Activated naive CD4-positive, alpha-beta T cell treated with anti-CD3 and anti-CD28 coated beads, Interleukin-2, amount 10 ng/mL, durations not matched to agents 7 days and 5 days (primary cell): ENCODE measurements at regions of chr1 and their contacts with region 1.

Region 1: DNA sequence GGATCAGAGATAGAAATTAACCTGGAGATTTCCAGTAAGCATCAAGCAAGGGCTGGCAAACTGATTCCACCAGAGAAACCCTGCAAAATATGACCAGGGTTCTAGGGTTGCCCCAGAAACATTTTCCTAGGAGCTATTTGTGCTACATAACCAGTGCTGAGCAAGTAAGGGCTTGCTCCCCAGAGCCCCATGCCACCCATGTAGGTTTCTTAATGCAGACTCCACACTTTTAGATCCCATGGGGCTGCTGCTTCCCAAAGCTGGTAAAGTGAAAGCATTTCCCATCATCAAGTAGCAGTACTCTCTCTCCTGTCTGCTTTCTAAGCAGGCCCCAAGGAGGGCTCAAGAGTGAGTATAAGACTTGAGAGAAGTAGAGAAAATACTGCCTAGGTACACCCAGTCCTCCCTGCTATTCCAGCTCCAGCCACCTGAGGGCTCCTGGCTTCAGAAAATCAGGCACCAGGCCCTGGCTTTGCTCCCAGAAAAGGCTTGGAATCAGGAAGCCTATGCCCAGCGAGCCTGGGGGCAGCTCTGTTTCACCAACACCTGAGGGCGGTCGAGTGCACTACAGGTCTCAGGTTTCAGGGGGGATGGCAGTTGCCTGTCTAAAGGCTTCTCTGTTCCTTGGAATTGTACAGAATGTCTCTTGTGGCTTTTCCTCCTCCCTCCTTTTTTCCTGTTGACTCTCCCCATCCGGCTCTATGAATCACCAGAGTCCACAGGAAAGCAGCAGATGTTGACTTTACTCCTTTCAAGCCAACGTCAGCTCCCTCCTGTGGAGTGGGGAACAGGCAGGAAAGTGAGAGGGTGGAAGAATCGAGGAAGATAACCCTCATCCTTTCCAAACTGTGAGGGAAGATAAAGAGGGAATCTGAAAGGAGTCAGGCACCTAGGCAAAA is 6.2 kb upstream of the ANKRD35 start:
- DNase-seq: peak; percentile 73
- H3K4me3 Mint-ChIP-seq: no peak overlapping the region
- H3K27ac Mint-ChIP-seq: no peak overlapping the region
- H3K4me1 Mint-ChIP-seq: peaks cover 1% of the 10 kb centered on the region
- H3K27me3 Mint-ChIP-seq: peaks cover 14% of the 10 kb centered on the region

Region 2: DNA sequence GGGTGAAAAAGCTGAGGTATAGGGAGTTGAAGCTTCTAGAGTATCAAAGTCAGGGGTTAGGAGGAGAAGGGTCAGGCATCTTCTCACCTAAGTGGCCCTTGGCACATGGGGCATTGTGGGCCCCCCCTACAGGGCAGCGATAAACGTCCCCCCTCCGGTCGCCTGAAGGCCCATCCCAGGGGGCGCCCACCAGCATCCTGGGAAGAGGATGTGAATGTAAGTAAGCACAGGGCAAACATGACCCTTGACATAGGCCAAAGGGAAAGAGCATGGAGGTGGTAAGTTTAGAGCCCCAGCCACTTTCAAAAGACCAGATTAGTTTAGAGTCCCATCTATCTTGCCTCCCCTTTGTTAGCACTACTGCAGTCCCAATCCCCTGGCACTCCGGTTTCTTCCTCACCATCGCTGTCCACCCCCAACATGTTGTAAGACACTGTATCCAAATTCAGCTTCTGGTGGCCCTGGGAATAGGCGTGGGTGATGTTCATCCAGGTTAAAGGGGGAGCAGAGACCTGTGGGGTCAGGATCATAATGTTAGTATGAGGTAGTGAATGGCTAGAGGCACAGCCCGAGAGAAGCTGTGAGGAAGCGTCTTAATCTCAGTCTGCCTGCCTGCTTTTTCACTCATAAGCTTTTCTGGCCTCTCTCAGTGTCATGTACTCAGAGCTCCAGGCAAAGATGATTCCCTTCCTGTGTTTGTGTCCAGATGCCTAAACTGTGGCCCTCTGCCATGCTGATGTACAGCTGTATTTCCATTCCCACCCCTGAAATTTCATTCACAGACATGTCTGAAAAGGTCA is 15.3 kb after region 1 on chr1:
- CTCF ChIA-PET with region 1: interaction called, 34 read pairs
- DNase-seq: no peak
- H3K4me3 Mint-ChIP-seq: no peak overlapping the region
- H3K27ac Mint-ChIP-seq: no peak overlapping the region
- H3K4me1 Mint-ChIP-seq: peaks cover 6% of the 10 kb centered on the region
- H3K27me3 Mint-ChIP-seq: no peaks in the 10 kb centered on the region

Region 3: GRCh38 chr1:146012737-146013403 is 121.0 kb after region 1 on chr1:
- CTCF ChIA-PET with region 1: interaction called, 31 read pairs
- DNase-seq: peak; percentile 75
- H3K4me3 Mint-ChIP-seq: no peak overlapping the region
- H3K27ac Mint-ChIP-seq: no peak overlapping the region
- H3K4me1 Mint-ChIP-seq: peaks cover 17% of the 10 kb centered on the region
- H3K27me3 Mint-ChIP-seq: peaks cover 26% of the 10 kb centered on the region